OCI-LY7 (cell line): ENCODE measurements at regions of chr12 and their contacts with region 1.

Region 1: DNA sequence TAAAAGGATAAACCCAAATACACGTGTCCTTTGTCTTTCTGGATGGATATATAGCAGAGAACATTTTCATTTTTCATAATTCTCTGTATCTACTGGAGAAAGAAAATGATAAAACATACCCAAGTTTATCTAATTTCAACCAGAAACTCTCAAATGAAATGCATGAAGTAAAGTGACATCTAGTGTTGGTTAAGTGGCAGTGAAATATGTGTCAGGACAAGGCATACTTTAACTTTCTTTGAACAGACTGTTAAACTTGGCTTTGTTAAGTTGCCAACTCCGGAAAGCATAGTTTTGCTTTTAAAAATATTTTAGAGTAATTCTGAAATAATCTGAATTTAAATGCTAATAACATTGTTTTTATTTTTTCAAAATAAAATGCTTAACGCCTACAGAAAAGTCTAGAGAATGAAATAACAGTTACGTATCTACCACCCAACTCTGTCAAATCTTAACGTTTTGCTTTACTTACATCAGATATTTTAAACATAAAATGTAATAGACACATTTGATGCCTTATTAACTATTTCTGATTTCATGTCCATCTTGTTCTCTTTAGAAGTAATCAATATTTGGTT is 25.2 kb upstream of the NTN4 start:
- DNase-seq: peak; percentile 27
- H3K4me3 ChIP-seq: no peak overlapping the region
- H3K27ac ChIP-seq: no peak overlapping the region
- H3K4me1 ChIP-seq: no peaks in the 10 kb centered on the region
- CTCF ChIP-seq: peak; percentile 89

Region 2: DNA sequence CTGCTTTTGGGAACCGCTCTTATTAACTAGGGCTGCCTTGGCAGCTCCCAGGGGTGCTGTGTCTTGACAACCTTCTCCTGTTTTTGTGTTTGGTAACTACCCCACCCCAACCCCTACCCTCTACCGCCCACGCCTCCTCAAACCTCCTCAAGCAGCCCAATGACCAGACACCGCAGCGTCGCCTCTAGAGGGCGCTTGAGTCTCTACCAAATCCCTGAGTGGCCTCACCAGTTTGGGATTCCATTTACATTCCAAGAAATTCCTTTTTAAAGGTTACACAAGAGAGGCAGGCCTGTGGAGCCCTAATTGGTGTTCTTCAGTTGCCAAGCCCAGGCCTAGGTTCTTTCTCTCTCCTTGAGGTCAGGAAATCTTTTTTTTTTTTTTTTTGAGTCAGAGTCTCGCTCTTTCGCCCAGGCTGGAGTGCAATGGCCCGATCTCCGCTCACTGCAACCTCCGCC is 192.1 kb before region 1 on chr12:
- CTCF ChIA-PET with region 1: no interaction called
- POLR2A ChIA-PET with region 1: no interaction called
- intact Hi-C with region 1: loop called (anchors 2 kb)
- DNase-seq: peak; percentile 51
- H3K4me3 ChIP-seq: no peak overlapping the region
- H3K27ac ChIP-seq: no peak overlapping the region
- H3K4me1 ChIP-seq: no peaks in the 10 kb centered on the region
- CTCF ChIP-seq: peak; percentile 87